Activated T-helper 2 cell treated with anti-CD3 and anti-CD28 coated beads, Interferon-gamma antibody, Interleukin-2, Interleukin-4, amounts not matched to agents 10 μg/mL and 5 μg/mL and 100 μg/mL, durations not matched to agents 14 hours and 24 hours and 36 hours (primary cell): ENCODE measurements at regions of chr16 and their contacts with region 1.

Region 1: GRCh38 chr16:58515125-58515870 is at the start of gene SETD6:
- DNase-seq: peak; percentile 70
- H3K4me3 Mint-ChIP-seq: peak within 1 kb of the TSS; percentile 86
- H3K27ac Mint-ChIP-seq: peak within 1 kb of the TSS; percentile 73
- H3K4me1 Mint-ChIP-seq: peaks cover 31% of the 10 kb centered on the region
- H3K27me3 Mint-ChIP-seq: no peaks in the 10 kb centered on the region
- total RNA-seq, gene SETD6: 24.4 and 24.7 TPM in 2 replicates

Region 2: DNA sequence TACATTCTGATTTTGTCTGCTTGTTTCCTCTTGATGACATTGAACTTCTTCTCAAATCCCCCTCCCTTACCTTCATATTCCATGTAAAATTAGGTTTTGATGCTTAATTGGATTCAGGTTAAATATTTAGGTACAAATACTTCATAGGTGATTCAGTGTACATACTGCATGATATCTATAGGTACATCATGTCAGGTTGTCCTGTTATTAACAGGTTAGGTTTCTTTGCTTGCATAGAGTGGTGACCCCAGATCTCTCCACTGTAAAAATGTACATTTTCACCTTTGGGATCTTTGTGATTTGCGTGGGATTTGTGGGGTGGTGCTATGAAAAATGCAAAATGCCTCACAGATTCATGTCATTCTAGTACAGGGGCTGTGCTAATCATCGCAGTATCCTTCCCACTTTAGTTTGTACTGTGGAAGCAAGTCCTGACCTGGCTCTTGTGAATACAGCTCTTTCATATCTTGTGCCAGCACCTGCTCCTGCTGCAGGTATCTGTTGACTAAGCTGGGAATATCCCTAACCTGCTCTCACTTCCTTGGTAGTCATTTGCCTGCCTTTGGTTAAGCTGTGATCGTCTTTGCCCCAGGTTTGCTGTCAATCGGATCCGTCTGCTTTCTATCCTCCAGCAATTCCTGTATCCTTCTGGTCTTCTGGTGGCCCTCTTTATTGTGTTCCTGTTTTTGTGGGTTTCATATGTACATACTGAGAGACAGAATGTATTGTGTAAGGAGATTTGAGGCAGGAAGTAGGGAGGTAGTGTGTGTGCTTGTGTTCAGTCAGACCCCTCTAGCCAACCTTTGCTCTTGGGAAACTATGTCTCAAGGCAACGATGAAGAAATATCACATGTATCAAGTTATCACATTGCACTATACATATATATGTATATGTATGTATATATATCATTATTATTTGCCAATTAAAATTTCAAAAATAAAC is 130.9 kb before region 1 on chr16:
- intact Hi-C with region 1: no loop called
- DNase-seq: no peak
- H3K4me3 Mint-ChIP-seq: no peak overlapping the region
- H3K27ac Mint-ChIP-seq: no peak overlapping the region
- H3K4me1 Mint-ChIP-seq: no peaks in the 10 kb centered on the region
- H3K27me3 Mint-ChIP-seq: peaks cover 17% of the 10 kb centered on the region

Region 3: DNA sequence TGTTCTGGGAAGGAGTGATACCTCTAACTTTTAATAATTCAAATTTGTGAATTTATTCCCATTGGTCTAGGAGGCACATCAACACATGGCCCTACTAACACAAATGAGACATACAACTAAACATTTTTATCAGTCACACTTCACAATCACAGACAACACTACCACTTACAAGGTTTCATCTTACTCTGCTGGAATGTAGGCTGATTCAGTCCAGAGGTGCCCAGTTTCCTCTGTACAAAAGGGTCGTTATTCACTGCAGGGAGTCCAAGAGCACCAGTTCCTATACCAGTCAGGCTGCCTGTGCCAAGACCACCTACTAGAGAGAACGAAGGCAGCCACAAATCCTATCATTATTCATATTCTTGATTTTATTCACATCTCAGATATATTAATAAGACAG is 41.4 kb after region 1 on chr16:
- intact Hi-C with region 1: loop called (anchors 5 kb)
- DNase-seq: no peak
- H3K4me3 Mint-ChIP-seq: no peak overlapping the region
- H3K27ac Mint-ChIP-seq: no peak overlapping the region
- H3K4me1 Mint-ChIP-seq: no peaks in the 10 kb centered on the region
- H3K27me3 Mint-ChIP-seq: no peaks in the 10 kb centered on the region

Region 4: DNA sequence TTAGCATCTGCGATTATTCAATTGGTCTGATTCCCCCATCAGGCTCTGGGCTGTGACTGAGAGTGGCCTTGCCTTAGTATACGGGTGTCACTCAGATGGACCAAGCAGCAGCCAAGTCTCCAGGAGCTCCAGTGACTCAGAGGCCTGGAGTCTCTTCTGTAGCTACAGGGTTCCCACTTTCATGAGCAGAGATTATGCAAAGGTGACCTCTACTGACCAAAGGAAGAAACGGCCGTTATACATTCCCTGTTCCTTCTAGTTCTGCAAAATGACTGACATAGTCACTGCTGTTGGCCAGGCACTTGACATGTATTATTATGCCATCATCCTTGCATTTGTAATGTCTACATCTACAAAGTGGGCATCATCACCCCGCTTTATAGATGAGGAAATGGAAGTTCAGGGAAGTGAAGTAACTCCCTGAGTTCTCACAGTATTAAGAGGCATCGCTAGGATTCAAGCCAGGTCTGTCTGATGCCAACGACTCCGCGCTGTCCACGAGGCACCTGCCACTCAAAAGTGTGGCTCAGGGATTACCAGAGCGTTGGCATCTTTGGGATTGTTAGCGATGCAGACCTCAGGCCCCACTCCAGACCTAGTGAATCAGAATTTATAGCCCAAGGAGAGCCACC is 146.0 kb after region 1 on chr16:
- intact Hi-C with region 1: loop called (anchors 1 kb)
- DNase-seq: no peak
- H3K4me3 Mint-ChIP-seq: no peak overlapping the region
- H3K27ac Mint-ChIP-seq: no peak overlapping the region
- H3K4me1 Mint-ChIP-seq: no peaks in the 10 kb centered on the region
- H3K27me3 Mint-ChIP-seq: no peaks in the 10 kb centered on the region

Region 5: GRCh38 chr16:58755989-58756649 is 240.8 kb after region 1 on chr16:
- intact Hi-C with region 1: loop called (anchors 1 kb)
- DNase-seq: peak; percentile 62
- H3K4me3 Mint-ChIP-seq: no peak overlapping the region
- H3K27ac Mint-ChIP-seq: no peak overlapping the region
- H3K4me1 Mint-ChIP-seq: peaks cover 7% of the 10 kb centered on the region
- H3K27me3 Mint-ChIP-seq: no peaks in the 10 kb centered on the region